AG04449 (cell line): ENCODE measurements at regions of chr5 and their contacts with region 1.

Region 1: GRCh38 chr5:168291464-168291961 is at the start of gene WWC1:
- DNase-seq: no peak
- H3K4me3 ChIP-seq: peak within 1 kb of the TSS; percentile 68
- CTCF ChIP-seq: peak; percentile 27

Region 2: DNA sequence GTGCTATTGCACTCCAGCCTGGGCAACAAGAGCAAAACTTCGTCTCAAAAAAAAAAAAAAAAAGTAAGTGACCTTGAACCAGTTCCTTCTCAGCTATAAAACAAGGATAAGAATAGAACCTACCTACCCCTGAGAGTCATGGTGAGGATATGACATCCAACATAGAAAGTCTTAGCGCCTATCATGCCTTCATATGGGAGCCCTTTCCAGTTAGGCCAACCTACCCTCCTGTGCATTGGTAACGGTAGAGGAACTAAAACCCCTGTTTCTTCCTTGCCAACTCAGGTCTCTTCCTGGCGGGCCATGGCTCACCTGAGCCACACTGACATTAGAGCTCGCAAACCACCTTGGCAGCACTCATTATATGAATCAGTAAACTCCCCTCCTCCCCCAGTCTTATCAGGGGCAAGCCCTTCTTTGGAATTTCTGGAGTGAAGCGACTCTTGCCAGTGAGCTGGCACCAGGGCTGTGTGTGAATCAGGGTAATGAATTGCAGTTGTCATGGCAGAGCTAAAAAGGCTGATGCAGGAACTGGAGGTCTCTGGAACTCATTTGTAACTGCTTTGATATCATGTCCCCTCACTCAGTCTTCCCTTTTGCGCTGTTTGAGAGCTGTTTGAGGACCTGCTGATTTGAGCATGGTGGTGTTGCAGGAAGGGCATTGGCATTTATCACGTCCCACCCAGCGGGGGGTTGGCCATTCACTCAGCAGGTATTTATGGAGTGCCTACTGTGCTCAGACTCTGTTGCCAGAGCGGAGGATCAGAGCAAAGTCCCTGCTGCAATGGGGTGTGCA is 10.3 kb after region 1 on chr5:
- CTCF ChIA-PET with region 1: interaction called, 87 read pairs
- POLR2A ChIA-PET with region 1: no interaction called
- DNase-seq: no peak
- H3K4me3 ChIP-seq: no peak overlapping the region
- CTCF ChIP-seq: no peak

Region 3: DNA sequence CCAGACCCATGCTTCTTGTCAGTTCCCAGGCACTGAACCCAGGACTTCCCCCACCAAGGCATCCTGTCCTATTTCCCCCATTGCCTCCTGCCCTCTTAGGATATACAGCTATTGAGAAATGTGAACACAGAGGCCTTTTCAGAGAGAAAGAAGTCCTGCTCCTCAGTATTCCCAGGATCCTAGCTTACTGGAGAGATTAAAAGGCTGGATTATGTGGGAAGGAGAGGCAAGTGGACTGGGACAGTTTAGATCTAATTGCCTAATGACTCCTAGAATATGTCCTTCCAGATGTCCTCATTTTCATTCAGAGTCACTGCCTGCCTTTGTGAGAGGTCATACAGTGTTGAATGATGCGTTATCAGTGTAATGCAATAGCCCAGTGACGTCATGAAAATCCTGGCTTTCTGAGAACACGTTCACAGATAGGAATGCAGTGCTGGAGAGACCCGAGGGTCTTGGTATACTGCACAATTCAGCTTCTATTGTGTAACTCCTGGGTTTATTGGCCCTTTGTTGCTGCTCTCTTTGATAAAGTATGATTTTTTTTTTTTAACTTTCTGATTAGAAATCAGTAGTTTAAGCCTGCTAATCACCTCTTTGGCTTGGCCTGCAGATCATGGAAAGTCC is 26.1 kb after region 1 on chr5:
- CTCF ChIA-PET with region 1: interaction called, 18 read pairs
- POLR2A ChIA-PET with region 1: no interaction called
- DNase-seq: peak; percentile 87
- H3K4me3 ChIP-seq: no peak overlapping the region
- CTCF ChIP-seq: no peak

Region 4: DNA sequence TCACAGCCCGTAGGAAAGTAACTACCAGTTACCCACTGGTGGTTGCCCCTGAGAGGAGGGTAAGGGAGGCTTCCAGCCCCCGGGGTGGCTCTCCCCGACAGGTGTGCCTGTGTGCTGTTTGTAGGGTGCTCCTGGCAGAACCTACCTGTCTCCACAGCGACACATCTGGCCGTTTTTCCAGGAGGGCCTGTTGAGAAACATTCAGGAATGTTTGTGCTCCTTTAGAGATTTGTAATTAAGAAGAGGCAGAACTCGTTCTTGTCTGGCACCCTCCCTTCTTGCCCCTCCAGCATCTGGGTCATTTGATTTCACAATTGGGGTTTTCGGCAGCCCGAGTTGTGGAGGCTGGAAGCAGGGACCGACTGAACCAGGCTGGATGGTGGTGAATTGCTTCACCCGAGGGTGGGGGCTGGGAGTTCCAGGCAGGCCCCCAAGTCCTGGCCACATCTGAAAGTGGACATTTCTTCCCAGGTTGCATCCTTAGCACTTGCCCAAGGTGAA is 74.1 kb after region 1 on chr5:
- CTCF ChIA-PET with region 1: interaction called, 10 read pairs
- POLR2A ChIA-PET with region 1: interaction called, 4 read pairs
- DNase-seq: no peak
- H3K4me3 ChIP-seq: no peak overlapping the region; the same call in 1 of the 2 replicates
- CTCF ChIP-seq: no peak

Region 5: DNA sequence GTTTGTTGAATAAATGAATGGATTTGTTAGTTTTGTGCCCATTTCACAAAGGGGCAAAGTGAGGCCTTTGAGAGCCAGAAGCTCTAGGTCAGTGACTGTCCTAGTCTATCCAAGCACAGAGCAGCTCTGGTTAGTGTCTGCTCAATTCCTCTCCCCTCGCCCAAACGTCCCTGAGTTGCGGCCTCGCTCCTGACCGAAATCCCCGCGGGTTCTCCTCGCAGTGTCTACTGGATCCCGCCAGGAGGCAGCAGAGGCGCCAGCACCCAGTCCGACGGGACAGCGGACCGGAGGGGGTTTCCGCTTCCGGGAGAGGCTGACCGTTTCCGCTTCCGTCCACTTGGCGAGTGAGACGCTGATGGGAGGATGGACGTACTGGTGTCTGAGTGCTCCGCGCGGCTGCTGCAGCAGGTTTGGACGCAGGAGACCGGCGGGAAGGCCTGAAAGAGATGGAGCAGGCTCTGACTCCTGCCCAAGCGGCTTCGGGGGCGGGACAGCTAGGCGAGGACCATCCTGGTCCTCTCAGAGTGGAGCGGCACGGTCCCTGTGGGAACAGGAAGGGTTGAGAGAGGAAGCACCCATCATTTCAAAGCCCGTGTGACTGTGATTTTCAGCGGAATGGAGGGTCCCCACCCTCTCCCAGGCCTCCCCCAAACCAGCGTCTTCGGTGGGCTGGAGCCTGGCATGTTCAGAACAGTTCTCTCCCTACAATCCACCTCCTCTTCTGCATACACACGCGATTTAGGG is 194.8 kb after region 1 on chr5 and contains the start of gene RARS1:
- CTCF ChIA-PET with region 1: interaction called, 40 read pairs
- POLR2A ChIA-PET with region 1: no interaction called
- DNase-seq: peak; percentile 65
- H3K4me3 ChIP-seq: peak within 1 kb of the TSS; percentile 64
- CTCF ChIP-seq: peak; percentile 99